ENCODE measurements at regions of chr7 and their contacts with region 1.

Region 1: DNA sequence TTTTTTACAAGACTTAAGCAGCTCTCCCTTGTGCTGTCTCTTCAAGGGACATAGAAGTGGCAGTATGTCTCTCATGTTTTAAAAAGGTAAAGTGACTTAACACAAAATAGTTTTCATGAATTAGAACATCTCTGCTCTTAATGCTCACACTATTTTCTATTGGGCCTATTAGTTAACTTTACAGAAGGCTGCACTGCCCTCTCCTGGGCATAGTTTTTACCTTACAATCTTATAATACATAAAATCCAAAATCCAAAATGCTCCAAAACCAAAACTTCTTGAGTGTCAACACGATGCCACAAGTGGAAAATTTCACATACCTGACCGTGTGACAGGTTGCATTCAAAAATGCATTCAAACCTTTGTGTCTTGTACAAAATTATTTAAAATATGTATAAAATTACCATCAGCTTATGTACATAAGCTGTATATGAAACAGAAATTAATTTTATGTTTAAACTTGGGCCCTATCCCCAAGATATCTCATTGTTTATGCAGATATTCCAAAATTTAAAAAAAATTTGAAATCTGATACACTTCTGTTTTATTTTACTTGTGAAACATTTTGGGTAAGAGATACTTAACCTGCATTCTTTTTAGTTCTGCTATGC is 25.8 kb downstream of the TES start:
- H3K4me3 ChIP-seq: no peak overlapping the region
- H3K27ac ChIP-seq: no peak overlapping the region
- H3K4me1 ChIP-seq: peaks cover 4% of the 10 kb centered on the region
- CTCF ChIP-seq: no peak

Region 2: GRCh38 chr7:116173051-116174028 is 62.8 kb before region 1 on chr7:
- CTCF ChIA-PET with region 1: interaction called, 131 read pairs
- POLR2A ChIA-PET with region 1: interaction called, 3 read pairs
- H3K4me3 ChIP-seq: no peak overlapping the region
- H3K27ac ChIP-seq: no peak overlapping the region
- H3K4me1 ChIP-seq: no peaks in the 10 kb centered on the region
- CTCF ChIP-seq: peak; percentile 52; the same call in 1 of the 2 replicates

Region 3: DNA sequence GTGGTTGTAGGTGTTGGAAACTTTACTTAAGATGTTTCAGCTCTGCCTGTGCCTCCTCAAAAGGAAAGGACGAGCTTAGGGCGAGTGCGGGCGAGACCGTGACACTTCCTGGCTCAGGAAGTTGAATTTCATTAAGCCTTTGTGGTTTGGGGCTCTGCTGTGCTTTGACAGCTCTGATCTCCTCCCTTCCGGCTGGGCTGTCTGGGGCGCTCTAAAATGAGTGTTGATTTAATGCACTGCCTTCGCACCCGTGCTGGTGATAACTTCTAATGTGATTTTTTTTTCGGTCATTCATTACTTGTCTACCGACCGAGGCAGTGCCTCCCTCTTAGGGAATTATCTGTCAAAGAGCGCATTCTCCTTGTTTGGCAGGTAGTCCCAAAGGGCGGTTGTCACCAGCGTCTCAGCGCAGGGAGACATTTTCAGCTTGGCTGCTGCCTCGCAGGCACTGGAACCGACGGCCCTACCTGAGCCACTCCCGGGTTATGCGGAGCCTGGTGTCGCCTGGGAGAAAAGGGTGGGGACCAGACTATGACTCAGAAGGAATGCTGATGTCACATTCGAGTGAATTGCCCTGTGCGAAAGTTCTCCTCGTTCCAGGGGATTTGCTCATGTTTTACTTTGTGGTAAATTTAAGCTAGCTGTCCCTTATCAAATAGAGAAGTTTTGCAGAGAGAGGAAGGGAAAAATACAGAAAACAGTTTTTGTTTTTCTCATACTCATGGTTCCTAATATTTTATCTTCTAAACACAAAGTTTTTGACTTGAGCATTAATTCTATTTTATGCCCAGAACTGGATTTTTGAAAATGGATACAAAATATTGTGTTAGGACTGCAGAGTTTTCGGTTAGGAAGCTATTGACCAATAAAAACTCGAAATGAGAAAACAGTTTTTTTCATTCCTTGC is 24.9 kb before region 1 on chr7:
- CTCF ChIA-PET with region 1: interaction called, 26 read pairs
- POLR2A ChIA-PET with region 1: interaction called, 3 read pairs
- H3K4me3 ChIP-seq: peak overlapping the region; percentile 79
- H3K27ac ChIP-seq: peak overlapping the region; percentile 95
- H3K4me1 ChIP-seq: peaks cover 7% of the 10 kb centered on the region
- CTCF ChIP-seq: no peak

Region 4: GRCh38 chr7:116224492-116225098 is 11.5 kb before region 1 on chr7:
- CTCF ChIA-PET with region 1: interaction called, 26 read pairs
- POLR2A ChIA-PET with region 1: no interaction called
- H3K4me3 ChIP-seq: no peak overlapping the region
- H3K27ac ChIP-seq: no peak overlapping the region
- H3K4me1 ChIP-seq: peaks cover 60% of the 10 kb centered on the region
- CTCF ChIP-seq: no peak

Region 5: GRCh38 chr7:116407165-116407564 is 171.0 kb after region 1 on chr7:
- CTCF ChIA-PET with region 1: no interaction called
- POLR2A ChIA-PET with region 1: no interaction called
- H3K4me3 ChIP-seq: no peak overlapping the region
- H3K27ac ChIP-seq: no peak overlapping the region
- H3K4me1 ChIP-seq: peaks cover 7% of the 10 kb centered on the region
- CTCF ChIP-seq: no peak

Measured in HEK293 (cell line).